ENCODE measurements at regions of chr10 and their contacts with region 1.

Region 1: DNA sequence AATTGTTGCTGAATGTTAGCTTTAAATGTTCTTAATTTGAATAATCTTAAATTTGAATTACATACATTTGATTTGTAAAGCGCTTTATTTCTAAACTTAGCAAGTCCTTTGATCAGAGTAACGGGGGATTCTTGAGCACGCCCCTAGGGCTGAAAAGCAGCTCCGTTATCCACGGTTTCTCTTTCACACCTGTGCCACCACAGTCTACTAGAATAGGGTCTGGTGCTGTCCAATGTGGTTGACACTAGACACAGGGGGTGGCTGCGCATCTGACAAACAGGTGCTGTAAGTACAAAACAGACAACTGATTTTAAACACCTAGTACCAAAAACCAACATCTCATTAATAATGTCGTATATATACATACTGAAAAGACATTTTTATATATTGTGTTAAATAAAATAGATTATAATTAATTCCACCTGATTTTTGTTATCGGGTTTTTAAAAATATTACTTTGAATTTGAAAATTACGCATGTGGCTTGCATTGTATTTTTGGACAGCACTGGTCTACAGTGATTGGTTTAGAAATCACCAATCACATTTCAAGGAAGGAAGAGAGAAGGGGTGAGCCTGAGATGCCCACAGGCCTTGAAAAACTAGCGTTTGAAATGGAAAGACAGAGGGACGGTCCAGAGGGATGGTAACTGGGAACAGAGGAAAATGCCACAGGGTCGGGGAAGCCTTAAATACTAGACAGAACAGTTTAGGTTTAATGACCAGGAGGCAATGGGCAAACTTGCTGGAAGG is 7.3 kb downstream of the SEPHS1 start:
- DNase-seq: no peak
- ATAC-seq: no peak
- H3K4me3 ChIP-seq: no peak overlapping the region
- H3K27ac ChIP-seq: no peak overlapping the region
- H3K4me1 ChIP-seq: peaks cover 4% of the 10 kb centered on the region; the same call in 1 of the 2 replicates
- H3K27me3 ChIP-seq: no peaks in the 10 kb centered on the region
- CTCF ChIP-seq: no peak
- POLR2A ChIP-seq: no peak
- RAD21 ChIP-seq: no peak

Region 2: DNA sequence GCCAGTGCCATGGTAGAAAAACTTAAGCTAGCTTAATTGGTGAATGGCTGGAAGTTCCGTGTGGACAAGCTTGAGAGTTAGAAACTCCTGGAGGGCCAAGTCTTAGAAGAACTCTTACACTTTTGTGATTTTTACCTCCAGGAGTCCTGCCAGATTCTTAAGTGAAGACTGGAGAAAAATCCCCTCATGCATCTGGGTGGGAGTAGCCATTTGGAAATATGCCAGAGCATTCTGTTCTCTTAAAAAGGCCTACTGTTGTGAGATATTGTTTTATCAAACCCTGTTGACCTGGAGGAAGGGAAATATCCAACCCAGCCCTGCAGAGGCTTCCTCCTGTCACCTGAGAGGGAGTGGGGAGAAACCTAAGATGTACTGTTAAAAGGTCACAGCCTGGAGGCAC is 197.0 kb before region 1 on chr10:
- CTCF ChIA-PET with region 1: no interaction called
- POLR2A ChIA-PET with region 1: interaction called, 15 read pairs
- dilution Hi-C with region 1: no loop called
- in situ Hi-C with region 1: no loop called
- intact Hi-C with region 1: no loop called
- DNase-seq: no peak
- ATAC-seq: no peak
- H3K4me3 ChIP-seq: no peak overlapping the region
- H3K27ac ChIP-seq: no peak overlapping the region
- H3K4me1 ChIP-seq: peaks cover 2% of the 10 kb centered on the region; the same call in 1 of the 2 replicates
- H3K27me3 ChIP-seq: no peaks in the 10 kb centered on the region
- CTCF ChIP-seq: no peak
- POLR2A ChIP-seq: no peak
- RAD21 ChIP-seq: no peak

Measured in IMR-90 (cell line).